ENCODE measurements at regions of chr17 and their contacts with region 1.

Region 1: DNA sequence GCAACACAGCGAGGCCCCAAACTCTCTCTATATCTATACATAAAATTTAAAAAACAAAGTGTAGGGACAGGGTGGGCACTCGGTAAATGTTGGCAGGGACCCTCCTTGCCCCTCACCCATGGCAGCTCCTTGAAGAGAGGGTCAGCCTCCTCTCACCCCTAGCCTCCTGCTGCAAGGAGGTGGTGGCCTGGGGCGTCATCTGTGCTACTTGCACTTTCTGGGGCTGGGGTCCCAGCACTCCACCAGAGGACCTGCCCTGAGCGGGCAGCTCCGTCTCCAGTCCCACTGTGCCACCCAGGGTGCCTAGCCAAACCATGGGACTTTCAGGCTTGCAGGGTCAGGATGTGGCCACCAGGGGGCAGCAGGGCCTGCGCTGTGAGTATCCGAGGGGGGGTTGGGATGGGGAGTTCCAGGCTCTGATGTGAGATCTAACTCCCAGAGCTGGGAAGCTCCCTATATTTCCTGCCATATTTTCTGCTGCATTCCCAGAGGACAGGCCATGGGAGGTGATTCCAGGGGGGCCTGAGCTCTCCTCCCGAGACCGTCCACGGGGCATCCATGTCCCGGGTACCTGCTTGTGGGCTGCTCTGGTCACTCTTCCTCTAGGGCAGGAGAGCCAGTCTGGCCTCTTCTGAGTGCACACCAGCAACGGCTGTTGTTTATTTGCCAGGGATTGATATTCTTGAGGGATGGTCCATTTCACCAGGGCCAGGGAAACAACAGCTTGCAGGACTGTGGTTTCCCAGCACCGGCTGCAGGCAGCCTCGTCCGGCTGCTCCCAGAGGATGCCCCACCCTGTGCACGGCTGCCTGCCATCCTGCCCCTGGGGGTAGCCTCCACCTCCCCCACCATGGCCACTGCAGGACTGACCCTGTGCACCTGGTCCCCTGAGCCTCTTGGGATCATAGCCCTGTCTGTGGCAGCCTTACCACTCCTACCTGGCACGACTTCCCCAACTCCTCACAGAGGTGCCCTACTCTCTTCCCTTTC is 1.1 kb downstream of the GPR142 start:
- DNase-seq: peak; percentile 87
- CTCF ChIP-seq: peak; percentile 99

Region 2: DNA sequence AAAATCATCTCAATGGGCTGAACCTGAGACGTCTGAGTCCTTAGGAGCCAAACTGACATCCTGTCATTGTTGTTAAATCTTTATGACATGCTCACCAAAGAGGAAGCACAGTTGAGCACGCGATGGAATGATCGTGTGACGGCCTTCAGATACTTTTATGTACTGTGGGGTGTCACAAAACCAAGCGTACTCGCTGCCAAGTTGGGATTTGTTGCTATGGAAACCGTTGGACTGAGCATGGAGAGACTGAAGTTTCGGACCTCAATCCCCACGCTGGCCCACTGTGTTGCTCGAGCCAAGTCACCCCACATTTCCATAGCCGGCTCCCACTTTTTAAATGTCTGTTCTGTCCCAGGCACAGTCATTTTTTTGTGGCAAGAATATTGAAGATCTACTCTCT is 501.3 kb before region 1 on chr17:
- CTCF ChIA-PET with region 1: no interaction called
- POLR2A ChIA-PET with region 1: no interaction called
- DNase-seq: no peak
- CTCF ChIP-seq: no peak

Region 3: DNA sequence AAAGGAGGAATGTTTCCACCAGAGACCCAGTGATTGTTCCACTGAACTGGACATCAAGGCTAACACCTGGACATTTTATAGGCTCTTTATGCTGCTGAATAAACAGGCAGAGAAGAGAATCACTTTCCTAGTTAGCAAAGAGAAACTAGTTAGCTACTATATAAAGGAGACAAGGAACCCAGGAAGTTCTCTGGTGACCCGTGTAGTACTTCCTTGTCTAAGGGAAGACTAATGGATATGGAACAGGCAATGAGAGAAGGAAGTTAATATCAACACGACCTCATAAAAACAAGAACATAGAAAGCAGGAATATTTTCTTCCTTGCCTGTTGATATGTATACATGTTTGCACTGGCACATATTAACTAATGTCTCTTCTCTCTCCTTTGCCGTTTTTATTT is 195.7 kb before region 1 on chr17:
- CTCF ChIA-PET with region 1: no interaction called
- POLR2A ChIA-PET with region 1: no interaction called
- DNase-seq: no peak
- CTCF ChIP-seq: no peak

Region 4: GRCh38 chr17:74347646-74348045 is 20.7 kb before region 1 on chr17:
- CTCF ChIA-PET with region 1: interaction called, 17 read pairs
- POLR2A ChIA-PET with region 1: no interaction called
- DNase-seq: no peak
- CTCF ChIP-seq: no peak

Region 5: DNA sequence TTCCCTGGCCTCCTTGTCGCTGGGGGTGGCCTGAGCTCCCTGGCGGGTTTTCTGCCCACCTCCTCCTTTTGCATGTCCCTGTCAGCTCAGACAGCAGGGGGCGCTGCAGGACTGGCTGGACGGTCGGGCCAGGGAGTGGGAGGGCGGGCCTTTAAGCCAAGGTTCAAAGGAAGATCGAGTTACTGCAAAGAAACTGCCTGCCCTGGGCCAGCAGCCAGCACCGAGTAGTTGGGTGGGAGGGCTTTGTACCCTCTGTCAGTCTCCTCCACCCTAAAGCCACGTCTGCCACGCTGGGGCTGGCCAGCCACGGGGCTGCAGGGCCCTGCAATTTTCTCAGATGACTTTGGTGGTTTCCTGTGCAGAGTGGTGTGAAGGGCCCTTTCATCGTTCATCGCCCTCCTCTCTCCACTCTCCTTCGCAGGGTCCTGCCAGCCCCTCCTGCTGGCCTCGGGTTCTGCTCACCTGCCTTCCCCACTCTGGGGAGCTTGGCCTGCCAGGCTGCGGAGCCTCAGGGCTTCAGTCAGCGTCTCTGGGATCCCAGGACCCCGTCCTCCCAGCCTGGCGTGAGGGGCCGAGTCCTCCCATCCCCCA is 11.2 kb after region 1 on chr17:
- CTCF ChIA-PET with region 1: interaction called, 77 read pairs
- POLR2A ChIA-PET with region 1: interaction called, 3 read pairs
- DNase-seq: peak; percentile 92
- CTCF ChIP-seq: peak; percentile 97

Region 6: DNA sequence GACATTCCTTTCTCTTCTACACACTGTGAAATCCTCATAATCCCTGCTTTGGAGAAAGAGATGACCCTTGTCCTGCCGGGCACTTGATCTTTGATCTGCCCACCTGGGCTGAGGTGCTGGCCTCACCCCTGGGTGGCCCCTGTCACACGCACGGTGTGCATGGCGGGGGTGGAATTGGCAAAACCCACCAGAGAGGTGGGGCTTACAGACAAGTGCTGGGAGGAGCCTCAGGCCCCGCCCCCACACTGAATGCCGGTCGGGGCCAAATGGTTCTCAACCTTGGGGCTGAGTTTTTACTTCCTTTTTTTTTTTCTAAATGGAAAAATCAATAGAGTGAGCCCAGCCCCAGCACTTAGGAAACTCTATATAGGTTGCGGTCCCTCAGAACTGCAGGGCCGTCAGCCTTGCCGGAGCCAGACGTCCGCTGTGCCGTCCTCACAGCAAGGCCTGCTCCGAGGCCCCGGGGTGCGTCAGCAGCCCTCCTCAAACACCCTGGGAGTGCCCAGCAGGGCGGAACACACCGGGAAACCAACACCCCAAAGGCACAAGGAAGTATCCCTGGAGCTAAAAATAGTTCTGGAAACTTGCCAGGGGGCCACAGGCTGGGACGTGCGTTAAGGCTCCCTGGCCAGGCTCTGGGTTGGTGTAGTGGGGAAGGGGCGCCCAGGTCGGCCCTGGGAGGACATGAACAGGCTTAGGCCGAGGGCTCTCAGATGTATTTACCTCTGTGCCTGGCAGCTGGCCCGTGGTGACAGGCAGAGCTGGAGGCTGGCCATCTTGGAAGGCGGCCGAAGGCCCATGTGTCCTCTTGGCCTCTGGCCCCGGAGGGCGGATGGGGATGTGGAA is 74.5 kb after region 1 on chr17:
- CTCF ChIA-PET with region 1: interaction called, 11 read pairs
- POLR2A ChIA-PET with region 1: no interaction called
- DNase-seq: peak; percentile 80
- CTCF ChIP-seq: no peak

Region 7: GRCh38 chr17:74493381-74493833 is 125.0 kb after region 1 on chr17:
- CTCF ChIA-PET with region 1: interaction called, 15 read pairs
- POLR2A ChIA-PET with region 1: no interaction called
- DNase-seq: peak; percentile 76
- CTCF ChIP-seq: peak; percentile 92

Region 8: GRCh38 chr17:74528491-74529199 is 160.3 kb after region 1 on chr17:
- CTCF ChIA-PET with region 1: interaction called, 66 read pairs
- POLR2A ChIA-PET with region 1: no interaction called
- DNase-seq: peak; percentile 77
- CTCF ChIP-seq: no peak